ENCODE measurements at regions of chr6 and their contacts with region 1.

Region 1: DNA sequence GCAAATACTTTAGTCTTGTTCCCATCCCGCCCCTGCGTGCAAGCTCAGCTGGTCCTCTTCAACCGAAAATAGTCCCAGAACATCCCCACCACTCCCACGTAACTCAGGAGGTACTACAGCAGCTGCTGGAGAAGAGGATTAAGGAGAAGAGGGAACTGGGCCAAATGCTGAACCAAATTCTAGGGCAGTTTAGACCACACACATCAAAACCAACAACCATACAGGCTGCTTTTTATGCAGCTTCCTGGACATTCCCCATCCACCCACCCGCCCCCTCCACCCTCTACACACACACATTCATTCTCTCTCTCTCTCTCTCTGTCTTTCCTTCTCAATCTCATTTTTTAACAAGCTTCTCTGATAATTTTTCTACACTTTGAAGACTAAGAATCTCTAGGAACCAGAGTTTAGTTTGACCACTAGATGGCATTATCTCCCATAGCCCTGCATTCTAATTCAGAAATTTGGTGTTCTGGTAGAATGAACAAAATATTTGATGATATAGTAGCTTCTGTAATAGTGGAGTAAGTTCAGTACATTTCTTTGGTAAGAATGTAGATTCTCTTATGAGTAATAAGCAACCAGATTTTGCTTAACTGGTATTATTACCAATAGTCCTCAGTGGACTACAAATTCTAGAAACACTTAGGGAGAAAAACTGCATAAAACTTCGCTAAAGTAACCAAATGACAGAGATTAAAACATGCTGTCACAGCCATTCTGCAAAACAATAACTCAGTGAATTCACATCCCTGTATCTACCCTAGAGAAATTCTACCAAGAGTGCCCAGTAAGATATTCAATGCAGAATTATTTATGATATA is 52.1 kb upstream of the BEND6 start:
- ATAC-seq: peak in 4 of 8 experiments; percentile 21 to 85 (median 72)
- H3K4me3 ChIP-seq: no peak overlapping the region
- H3K27ac ChIP-seq: no peak overlapping the region
- H3K4me1 ChIP-seq: no peaks in the 10 kb centered on the region

Region 2: GRCh38 chr6:55176958-55177357 is 1725.9 kb before region 1 on chr6:
- in situ Hi-C with region 1: no loop called
- ATAC-seq: no peak
- H3K4me3 ChIP-seq: peak overlapping the region in 4 of 5 donors; percentile 47 to 53 (median 48)
- H3K27ac ChIP-seq: no peak overlapping the region
- H3K4me1 ChIP-seq: peaks cover 0 to under 1% of the 10 kb centered on the region in 2 donors

Region 3: DNA sequence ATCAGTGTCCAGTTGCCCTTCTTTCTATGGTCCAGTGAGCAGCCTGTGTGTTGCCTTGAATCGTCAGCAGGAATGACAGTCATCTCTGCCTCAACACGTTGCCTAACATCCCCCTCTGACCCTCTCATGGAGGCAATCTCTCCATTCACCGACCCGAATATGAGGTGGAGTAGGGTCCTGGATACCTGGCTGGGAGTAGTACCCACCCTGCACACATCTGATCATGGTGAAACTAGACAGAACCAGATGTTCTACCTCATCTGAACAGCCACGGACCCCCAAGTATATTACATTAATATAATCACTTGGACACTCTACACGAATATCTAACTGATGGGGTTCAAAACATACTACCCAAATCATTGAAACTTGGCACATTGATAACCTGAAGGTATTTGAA is 578.5 kb before region 1 on chr6:
- in situ Hi-C with region 1: no loop called
- ATAC-seq: no peak
- H3K4me3 ChIP-seq: no peak overlapping the region
- H3K27ac ChIP-seq: no peak overlapping the region
- H3K4me1 ChIP-seq: no peaks in the 10 kb centered on the region

Region 4: GRCh38 chr6:57276946-57277345 is 374.1 kb after region 1 on chr6:
- in situ Hi-C with region 1: no loop called
- ATAC-seq: peak in 2 of 8 experiments; percentile 23 to 37
- H3K4me3 ChIP-seq: no peak overlapping the region
- H3K27ac ChIP-seq: no peak overlapping the region
- H3K4me1 ChIP-seq: no peaks in the 10 kb centered on the region

Region 5: GRCh38 chr6:57316581-57317059 is 413.8 kb after region 1 on chr6:
- in situ Hi-C with region 1: loop called in 7 of 9 experiments (anchors 10 to 25 kb)
- ATAC-seq: peak; percentile 51 to 94 (median 92)
- H3K4me3 ChIP-seq: peak overlapping the region; percentile 55 to 86 (median 65)
- H3K27ac ChIP-seq: no peak overlapping the region
- H3K4me1 ChIP-seq: peaks cover 4% of the 10 kb centered on the region in 2 donors

Region 6: GRCh38 chr6:57324538-57324937 is 421.7 kb after region 1 on chr6:
- in situ Hi-C with region 1: loop called in 7 of 9 experiments (anchors 10 to 25 kb)
- ATAC-seq: no peak
- H3K4me3 ChIP-seq: no peak overlapping the region
- H3K27ac ChIP-seq: no peak overlapping the region
- H3K4me1 ChIP-seq: no peaks in the 10 kb centered on the region

Measured in motor neuron (in vitro differentiated cells).